HEK293T (cell line): ENCODE measurements at regions of chr1 and their contacts with region 1.

Region 1: DNA sequence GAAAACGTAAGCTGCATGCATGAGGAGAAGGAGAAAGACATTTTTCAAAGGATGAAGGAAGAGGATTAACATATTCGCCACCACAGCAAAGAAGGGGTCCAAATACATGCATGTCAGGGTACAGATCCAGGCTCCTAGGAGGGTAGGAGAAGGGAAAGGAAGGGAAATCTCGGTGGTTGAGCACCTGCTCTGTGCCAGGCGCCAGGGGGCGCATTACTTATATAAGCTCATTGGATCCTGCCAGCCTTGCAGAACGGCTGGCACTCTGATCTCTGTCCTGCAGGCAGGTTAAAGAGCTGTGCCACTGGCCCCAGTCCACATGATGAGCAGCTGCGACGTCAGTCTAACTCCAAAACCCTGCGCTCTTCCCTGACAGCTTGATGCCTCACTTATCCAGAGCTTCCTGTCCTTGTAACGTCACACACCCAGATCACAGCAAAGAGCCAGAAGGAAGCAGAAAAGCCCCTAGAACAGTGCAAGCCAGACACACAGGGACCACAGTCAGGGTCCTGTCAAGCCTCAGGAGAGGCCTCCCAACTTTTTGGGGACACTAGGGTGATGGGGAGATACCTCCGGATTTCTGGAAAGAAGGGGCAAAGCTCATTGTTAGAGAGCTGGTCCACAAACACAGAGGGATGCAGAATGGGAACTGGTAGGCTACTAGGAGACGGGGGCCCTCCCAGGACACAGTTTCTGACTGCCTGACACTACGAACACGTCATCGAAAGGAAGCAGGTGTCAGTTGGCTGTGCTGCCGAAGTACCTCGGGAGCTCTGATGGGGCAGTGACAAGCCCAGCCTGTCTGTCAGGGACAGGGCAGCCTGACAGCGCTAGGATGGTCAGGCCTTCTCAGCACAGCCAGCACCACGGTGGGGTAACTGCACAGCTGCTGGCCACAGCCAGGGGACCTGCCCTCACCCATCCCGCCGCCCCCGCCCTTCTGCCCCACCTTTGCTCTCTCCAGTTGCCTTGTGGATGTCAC is 99.1 kb downstream of the BEND5 start:
- DNase-seq: peak; percentile 55

Region 2: GRCh38 chr1:48177257-48177656 is 500.3 kb before region 1 on chr1:
- CTCF ChIA-PET with region 1: no interaction called
- POLR2A ChIA-PET with region 1: no interaction called
- DNase-seq: no peak

Region 3: GRCh38 chr1:48691429-48692001 is 13.9 kb after region 1 on chr1:
- CTCF ChIA-PET with region 1: interaction called, 18 read pairs
- POLR2A ChIA-PET with region 1: interaction called, 3 read pairs
- DNase-seq: no peak

Region 4: DNA sequence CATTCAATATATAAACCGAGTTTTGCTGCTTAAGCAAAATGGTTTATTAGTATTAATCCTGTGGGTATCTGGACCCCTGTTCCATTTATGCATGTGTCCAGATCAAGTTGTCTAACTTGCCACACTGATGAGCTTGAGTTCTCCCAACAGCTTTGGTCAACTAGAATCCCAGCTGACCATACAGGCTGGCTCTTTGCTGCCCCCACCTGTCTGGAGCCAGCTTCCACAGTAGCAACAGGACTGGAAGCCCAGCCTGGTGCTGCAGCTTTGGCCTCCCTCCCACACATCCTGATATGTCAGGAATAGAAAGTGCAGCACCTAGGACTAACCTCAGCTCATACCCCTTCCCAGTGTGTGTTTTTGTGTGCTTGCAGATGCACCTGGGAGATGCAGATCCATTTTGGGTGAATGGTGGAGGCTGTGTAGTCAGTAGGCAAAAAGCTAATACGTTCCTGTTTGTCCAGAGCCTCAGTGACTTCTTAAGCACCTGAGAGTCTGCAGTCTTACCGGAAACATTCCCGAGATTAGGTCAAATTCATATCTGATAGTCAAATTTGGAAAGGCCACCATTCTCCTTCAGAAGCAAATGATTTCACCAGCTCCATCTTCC is 140.0 kb after region 1 on chr1:
- CTCF ChIA-PET with region 1: interaction called, 26 read pairs
- POLR2A ChIA-PET with region 1: no interaction called
- DNase-seq: peak; percentile 62